Prostate gland (tissue), 2 donors: ENCODE measurements at regions of chr9 and their contacts with region 1.

Region 1: DNA sequence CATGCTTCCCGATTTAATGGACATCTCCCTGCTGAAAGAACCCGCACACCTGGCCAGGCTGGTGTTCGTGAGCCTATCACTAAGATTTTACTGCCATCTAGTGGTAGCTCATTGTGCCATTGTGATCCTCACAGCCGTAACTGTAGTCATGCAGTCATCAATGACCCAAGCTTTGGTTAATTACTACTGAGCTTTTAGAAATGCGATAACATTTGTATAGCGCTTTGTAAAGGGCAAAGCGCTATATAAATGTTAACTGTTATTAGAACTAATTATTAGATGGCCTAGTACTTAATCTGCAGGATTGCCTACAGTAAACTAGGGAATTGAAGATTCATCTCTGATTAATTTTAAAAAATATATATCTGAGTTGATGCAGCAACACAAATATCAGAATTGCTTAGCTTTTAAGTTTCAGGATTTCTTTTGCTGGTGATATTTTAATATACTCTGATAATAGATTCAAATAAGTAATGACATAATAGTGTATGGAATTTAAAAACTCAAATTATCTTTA is 90.2 kb downstream of the HACD4 start:
- DNase-seq: peak; percentile 67
- H3K4me3 ChIP-seq: no peak overlapping the region
- H3K27ac ChIP-seq: no peak overlapping the region
- H3K4me1 ChIP-seq: no peaks in the 10 kb centered on the region
- H3K27me3 ChIP-seq: no peaks in the 10 kb centered on the region
- CTCF ChIP-seq: peak; percentile 56 to 81 (median 80)
- POLR2A ChIP-seq: no peak

Region 2: GRCh38 chr9:20356403-20357035 is 584.7 kb before region 1 on chr9:
- intact Hi-C with region 1: loop called (anchors 5 kb)
- DNase-seq: peak; percentile 78
- H3K4me3 ChIP-seq: peak overlapping the region in 1 of 2 donors; percentile 14
- H3K27ac ChIP-seq: peak overlapping the region; percentile 38 to 59
- H3K4me1 ChIP-seq: peaks cover 4% of the 10 kb centered on the region
- H3K27me3 ChIP-seq: no peaks in the 10 kb centered on the region
- CTCF ChIP-seq: peak in 3 of 4 experiments; percentile 60 to 71 (median 64)
- POLR2A ChIP-seq: no peak

Region 3: GRCh38 chr9:20728493-20729220 is 212.6 kb before region 1 on chr9:
- intact Hi-C with region 1: no loop called
- DNase-seq: peak; percentile 5
- H3K4me3 ChIP-seq: no peak overlapping the region
- H3K27ac ChIP-seq: no peak overlapping the region
- H3K4me1 ChIP-seq: peaks cover 3% of the 10 kb centered on the region
- H3K27me3 ChIP-seq: no peaks in the 10 kb centered on the region
- CTCF ChIP-seq: no peak
- POLR2A ChIP-seq: no peak

Region 4: DNA sequence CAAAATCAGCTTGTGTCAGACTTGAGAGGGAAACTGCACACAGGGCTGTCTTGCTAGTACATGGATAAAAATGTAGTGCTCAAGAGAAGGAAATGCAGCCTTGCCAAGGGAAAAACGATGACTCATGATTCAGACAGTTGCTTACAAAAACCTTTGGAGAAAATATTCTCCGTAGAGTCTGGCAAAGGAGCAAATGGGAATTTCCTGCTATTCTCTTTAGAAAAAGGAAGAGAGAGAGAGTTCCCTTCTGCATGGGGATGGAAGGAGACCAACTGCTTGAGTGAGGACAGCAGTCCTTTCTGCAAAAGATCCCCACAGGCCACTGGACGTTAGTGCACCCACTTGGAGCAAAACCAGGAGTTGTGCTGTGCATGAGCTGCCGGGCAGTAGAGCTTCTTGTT is 128.9 kb after region 1 on chr9:
- intact Hi-C with region 1: no loop called
- DNase-seq: peak; percentile 33
- H3K4me3 ChIP-seq: no peak overlapping the region
- H3K27ac ChIP-seq: no peak overlapping the region
- H3K4me1 ChIP-seq: no peaks in the 10 kb centered on the region
- H3K27me3 ChIP-seq: no peaks in the 10 kb centered on the region
- CTCF ChIP-seq: peak in 1 of 4 experiments; percentile 20
- POLR2A ChIP-seq: no peak